ENCODE measurements at regions of chr18 and their contacts with region 1.

Region 1: DNA sequence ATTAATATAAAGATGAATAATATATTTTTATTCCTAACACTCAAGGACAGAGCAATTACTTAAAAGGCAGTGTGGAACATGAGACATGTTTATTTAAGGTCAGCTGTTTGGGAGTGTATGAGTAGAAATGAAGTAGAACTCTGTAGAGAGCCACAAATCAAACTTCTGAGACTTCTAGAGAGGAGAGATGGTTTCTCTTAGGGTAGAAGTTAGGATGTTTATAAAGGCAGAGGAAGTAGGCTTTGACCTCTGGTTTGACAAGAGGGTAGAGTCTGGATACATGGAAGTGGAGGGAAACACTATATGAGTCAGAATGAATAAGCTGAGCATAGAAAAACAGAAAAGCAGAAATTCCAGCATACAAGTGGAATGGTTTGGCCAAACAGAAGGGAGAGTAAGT is 262.1 kb upstream of the KLHL14 start:
- DNase-seq: peak; percentile 0
- ATAC-seq: no peak
- H3K4me3 ChIP-seq: no peak overlapping the region
- H3K27ac ChIP-seq: no peak overlapping the region
- H3K4me1 ChIP-seq: no peaks in the 10 kb centered on the region
- H3K27me3 ChIP-seq: no peaks in the 10 kb centered on the region
- CTCF ChIP-seq: no peak
- POLR2A ChIP-seq: no peak
- RAD21 ChIP-seq: no peak

Region 2: DNA sequence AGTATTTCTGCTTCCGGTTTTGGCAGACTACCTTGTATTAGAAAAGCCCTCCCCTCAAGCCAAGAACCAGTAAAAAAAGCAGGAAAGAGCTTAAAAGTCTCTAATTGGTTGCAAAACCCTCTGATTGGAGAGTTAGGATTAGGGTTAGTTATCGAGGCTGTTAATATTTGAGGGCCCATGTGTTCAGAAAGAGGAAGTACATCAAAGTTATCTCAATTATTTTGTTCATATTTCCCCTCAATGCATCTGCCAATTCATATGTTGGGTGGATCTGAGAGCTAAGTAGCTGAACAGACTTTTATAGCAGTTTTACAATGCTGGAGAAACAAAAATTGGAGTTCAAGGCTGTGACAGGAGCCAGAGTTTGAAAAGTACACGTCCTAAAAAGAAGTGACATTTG is 219.1 kb before region 1 on chr18:
- CTCF ChIA-PET with region 1: no interaction called
- POLR2A ChIA-PET with region 1: no interaction called
- dilution Hi-C with region 1: no loop called
- in situ Hi-C with region 1: no loop called
- intact Hi-C with region 1: no loop called
- DNase-seq: no peak
- ATAC-seq: no peak
- H3K4me3 ChIP-seq: no peak overlapping the region
- H3K27ac ChIP-seq: no peak overlapping the region
- H3K4me1 ChIP-seq: no peaks in the 10 kb centered on the region
- H3K27me3 ChIP-seq: no peaks in the 10 kb centered on the region
- CTCF ChIP-seq: no peak
- POLR2A ChIP-seq: no peak
- RAD21 ChIP-seq: no peak

Region 3: DNA sequence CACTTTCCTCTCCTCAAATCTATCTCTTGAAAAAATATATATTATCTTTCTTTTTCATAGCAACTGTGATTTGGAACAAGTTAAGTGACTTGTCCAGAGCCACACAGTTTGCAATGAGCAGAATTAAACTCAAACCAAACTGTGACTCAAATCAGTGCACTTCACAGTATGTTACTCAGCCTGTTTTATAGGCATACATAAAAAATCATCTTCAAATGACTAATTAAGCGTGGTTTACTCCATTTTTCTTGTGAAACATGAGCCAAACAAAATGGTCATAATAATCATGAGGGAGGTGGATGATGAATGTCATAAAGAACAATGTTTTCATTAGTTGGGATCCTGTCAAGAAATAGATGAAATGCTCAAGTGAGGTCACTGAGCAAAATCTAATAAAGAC is 411.7 kb after region 1 on chr18:
- CTCF ChIA-PET with region 1: no interaction called
- POLR2A ChIA-PET with region 1: no interaction called
- dilution Hi-C with region 1: no loop called
- in situ Hi-C with region 1: no loop called
- intact Hi-C with region 1: loop called (anchors 5 kb)
- DNase-seq: no peak
- ATAC-seq: no peak
- H3K4me3 ChIP-seq: no peak overlapping the region
- H3K27ac ChIP-seq: no peak overlapping the region
- H3K4me1 ChIP-seq: no peaks in the 10 kb centered on the region
- H3K27me3 ChIP-seq: no peaks in the 10 kb centered on the region; the same call in 1 of the 2 replicates
- CTCF ChIP-seq: no peak
- POLR2A ChIP-seq: no peak
- RAD21 ChIP-seq: no peak